ENCODE measurements at regions of chr4 and their contacts with region 1.

Region 1: GRCh38 chr4:87150498-87151261 is 69.7 kb downstream of the KLHL8 start:
- DNase-seq: peak in 2 of 10 donors; percentile 10 to 34

Region 2: GRCh38 chr4:87011340-87012034 is 139.2 kb before region 1 on chr4:
- intact Hi-C with region 1: no loop called
- DNase-seq: no peak

Region 3: DNA sequence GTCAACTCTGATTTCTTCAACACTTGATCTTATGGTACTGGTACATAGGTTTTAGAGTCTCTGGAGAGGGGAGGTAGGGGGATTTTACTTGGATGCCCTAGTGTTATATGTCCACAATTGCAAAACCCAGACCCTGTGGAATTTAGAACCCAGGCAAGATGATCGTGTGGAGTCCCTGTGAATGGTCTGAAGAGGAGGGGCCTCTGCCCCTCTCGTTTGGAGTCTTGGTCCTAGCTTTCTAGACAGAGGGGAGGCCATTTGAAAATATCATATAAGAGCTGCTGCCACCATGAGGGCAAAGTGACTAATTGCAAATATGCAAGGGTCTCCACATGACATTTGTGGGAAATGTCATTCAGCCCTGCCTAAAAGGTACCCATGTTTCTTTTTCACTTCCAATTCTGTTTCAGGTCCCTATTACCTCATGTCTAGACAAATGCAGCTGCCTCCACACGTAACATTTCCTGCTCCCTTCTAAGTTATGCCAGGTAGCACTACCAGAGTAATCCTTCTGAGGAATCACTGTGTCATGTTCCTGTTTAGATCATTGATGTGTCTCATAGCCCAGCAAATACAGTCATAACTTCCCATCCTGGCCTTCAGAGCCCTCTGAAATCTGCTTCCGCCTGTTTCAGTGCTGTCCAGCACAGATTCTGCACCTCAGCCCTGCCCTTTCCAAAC is 57.1 kb before region 1 on chr4:
- intact Hi-C with region 1: no loop called
- DNase-seq: peak in 3 of 10 donors; percentile 41 to 48 (median 42)

Region 4: GRCh38 chr4:87235020-87235671 is 84.5 kb after region 1 on chr4:
- intact Hi-C with region 1: loop called (anchors 1 kb)
- DNase-seq: no peak

Region 5: GRCh38 chr4:87304671-87305432 is 154.2 kb after region 1 on chr4:
- intact Hi-C with region 1: no loop called
- DNase-seq: no peak

Region 6: DNA sequence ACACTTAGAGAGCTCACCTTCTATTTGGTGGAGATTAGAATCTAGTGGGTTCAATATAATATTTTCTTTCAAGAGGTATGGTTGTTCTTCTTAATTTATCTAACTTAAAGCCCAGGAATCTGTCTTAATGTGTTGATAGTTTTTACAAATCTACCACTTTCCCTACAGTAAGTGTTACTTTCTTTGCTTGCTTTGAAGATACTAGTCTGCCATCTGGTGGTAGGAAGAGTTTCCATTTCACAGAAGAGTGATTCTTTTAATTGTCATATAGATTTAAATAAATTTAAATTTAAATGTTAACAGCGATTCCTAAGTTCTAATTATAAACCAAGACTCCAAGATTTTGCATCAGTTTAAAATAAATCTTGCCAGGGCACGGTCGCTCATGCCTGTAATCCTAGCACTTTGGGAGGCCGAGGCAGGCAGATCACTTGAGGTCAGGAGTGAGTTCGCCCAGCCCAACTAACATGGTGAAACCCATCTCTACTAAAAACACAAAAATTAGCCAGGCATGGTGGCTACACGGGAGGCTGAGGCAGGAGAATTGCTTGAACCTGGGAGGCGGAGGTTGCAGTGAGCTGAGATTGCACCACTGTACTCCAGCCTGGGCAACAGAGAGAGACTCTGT is 315.2 kb after region 1 on chr4:
- intact Hi-C with region 1: loop called (anchors 10 kb)
- DNase-seq: no peak